CD8-positive, alpha-beta memory T cell (primary cell): ENCODE measurements at regions of chr17 and their contacts with region 1.

Region 1: GRCh38 chr17:64975329-64976087 is 56.2 kb upstream of the LRRC37A3 start:
- DNase-seq: peak; percentile 96 to 99 (median 98)
- H3K4me3 ChIP-seq: peak overlapping the region; percentile 82
- H3K4me3 Mint-ChIP-seq: peak overlapping the region; percentile 86 to 96 (median 92)
- H3K27ac ChIP-seq: peak overlapping the region; percentile 96
- H3K27ac Mint-ChIP-seq: peak overlapping the region; percentile 97 to 100 (median 100)
- H3K4me1 ChIP-seq: peaks cover 23% of the 10 kb centered on the region
- H3K4me1 Mint-ChIP-seq: peaks cover 35 to 65% (median 56%) of the 10 kb centered on the region in 3 donors
- H3K27me3 ChIP-seq: no peaks in the 10 kb centered on the region
- H3K27me3 Mint-ChIP-seq: peaks cover 0 to 4% of the 10 kb centered on the region in 2 donors

Region 2: GRCh38 chr17:65039336-65039988 is 64.0 kb after region 1 on chr17:
- CTCF ChIA-PET with region 1: interaction called, 4 read pairs
- POLR2A ChIA-PET with region 1: interaction called, 10 read pairs
- DNase-seq: peak in 4 of 5 donors; percentile 50 to 82 (median 78)
- H3K4me3 ChIP-seq: peak overlapping the region; percentile 42
- H3K4me3 Mint-ChIP-seq: peak overlapping the region; percentile 31 to 88 (median 75)
- H3K27ac ChIP-seq: peak overlapping the region; percentile 49
- H3K27ac Mint-ChIP-seq: peak overlapping the region; percentile 87 to 99 (median 94)
- H3K4me1 ChIP-seq: peaks cover 91% of the 10 kb centered on the region
- H3K4me1 Mint-ChIP-seq: peaks cover 80 to 91% (median 90%) of the 10 kb centered on the region in 3 donors
- H3K27me3 ChIP-seq: no peaks in the 10 kb centered on the region
- H3K27me3 Mint-ChIP-seq: peaks cover 0 to 3% of the 10 kb centered on the region in 2 donors